K562 (cell line): ENCODE measurements at regions of chr14 and their contacts with region 1.

Region 1: DNA sequence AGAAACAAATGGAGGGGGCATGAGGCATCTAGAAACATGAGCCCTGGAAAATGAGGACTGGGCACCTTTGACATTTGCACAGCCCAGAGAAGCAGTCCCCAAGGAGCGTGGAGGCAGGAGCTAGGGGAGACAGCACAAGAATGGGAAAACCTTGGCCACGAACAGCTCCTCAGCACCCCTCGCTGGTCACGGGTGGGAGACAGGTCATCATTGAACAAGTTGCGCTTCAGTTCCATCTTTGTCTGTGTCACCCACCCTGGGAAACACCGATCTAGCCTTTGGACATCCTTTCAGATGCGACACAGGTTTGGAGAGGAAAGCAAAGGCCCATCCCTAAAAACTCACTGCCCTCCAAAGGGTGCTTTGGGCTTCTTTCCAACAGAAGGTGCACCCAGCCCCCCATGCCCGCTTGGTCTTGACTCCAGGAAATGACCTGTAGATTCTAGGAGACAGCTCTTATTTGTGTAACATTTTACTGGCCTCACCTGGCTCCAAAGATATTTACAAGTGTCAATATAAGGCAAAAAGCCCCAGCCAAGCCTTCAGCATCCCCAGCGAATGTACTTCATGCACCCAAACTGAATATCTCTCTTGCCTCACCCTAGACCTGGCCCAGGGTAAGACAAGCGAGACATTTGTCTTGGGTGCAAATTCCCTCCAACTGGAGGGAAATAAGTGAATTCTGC is 28.8 kb upstream of the CLMN start:
- DNase-seq: no peak
- ATAC-seq: no peak
- H3K4me3 ChIP-seq: no peak overlapping the region
- H3K27ac ChIP-seq: no peak overlapping the region
- H3K4me1 ChIP-seq: no peaks in the 10 kb centered on the region
- H3K27me3 ChIP-seq: no peaks in the 10 kb centered on the region; a peak in 1 of 5 replicates
- CTCF ChIP-seq: no peak
- EP300 ChIP-seq: no peak
- POLR2A ChIP-seq: no peak
- RAD21 ChIP-seq: no peak

Region 2: DNA sequence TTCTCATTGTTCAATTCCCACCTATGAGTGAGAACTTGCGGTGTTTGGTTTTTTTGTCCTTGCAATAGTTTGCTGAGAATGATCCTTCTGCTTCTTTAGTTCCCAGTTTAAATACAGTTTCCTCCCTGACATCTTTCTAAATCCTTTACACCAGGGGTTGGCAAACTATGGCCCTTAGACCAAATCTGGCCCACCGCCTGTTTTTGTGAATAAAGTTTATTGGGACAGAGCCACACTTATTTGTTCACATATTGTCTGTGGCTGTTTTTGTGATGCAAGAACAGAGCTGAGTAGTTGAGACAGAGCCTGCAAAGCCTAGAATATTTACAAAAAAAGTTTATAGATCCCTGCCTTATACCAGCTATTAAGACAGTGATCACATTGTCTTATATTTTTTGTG is 1109.1 kb before region 1 on chr14:
- CTCF ChIA-PET with region 1: no interaction called
- POLR2A ChIA-PET with region 1: no interaction called
- in situ Hi-C with region 1: no loop called
- intact Hi-C with region 1: no loop called
- DNase-seq: no peak
- ATAC-seq: no peak
- H3K4me3 ChIP-seq: no peak overlapping the region
- H3K27ac ChIP-seq: no peak overlapping the region
- H3K4me1 ChIP-seq: no peaks in the 10 kb centered on the region
- H3K27me3 ChIP-seq: no peaks in the 10 kb centered on the region
- CTCF ChIP-seq: no peak
- EP300 ChIP-seq: no peak
- POLR2A ChIP-seq: no peak
- RAD21 ChIP-seq: no peak

Region 3: GRCh38 chr14:95255487-95255886 is 93.1 kb before region 1 on chr14:
- CTCF ChIA-PET with region 1: no interaction called
- POLR2A ChIA-PET with region 1: no interaction called
- in situ Hi-C with region 1: no loop called
- intact Hi-C with region 1: no loop called
- DNase-seq: peak; percentile 16 to 40 (median 30)
- ATAC-seq: peak; percentile 88
- H3K4me3 ChIP-seq: no peak overlapping the region
- H3K27ac ChIP-seq: no peak overlapping the region
- H3K4me1 ChIP-seq: no peaks in the 10 kb centered on the region
- H3K27me3 ChIP-seq: peaks cover 2 to 32% of the 10 kb centered on the region in 2 experiments; a peak in 2 of 5 replicates
- CTCF ChIP-seq: no peak
- EP300 ChIP-seq: no peak
- POLR2A ChIP-seq: no peak
- RAD21 ChIP-seq: no peak

Region 4: DNA sequence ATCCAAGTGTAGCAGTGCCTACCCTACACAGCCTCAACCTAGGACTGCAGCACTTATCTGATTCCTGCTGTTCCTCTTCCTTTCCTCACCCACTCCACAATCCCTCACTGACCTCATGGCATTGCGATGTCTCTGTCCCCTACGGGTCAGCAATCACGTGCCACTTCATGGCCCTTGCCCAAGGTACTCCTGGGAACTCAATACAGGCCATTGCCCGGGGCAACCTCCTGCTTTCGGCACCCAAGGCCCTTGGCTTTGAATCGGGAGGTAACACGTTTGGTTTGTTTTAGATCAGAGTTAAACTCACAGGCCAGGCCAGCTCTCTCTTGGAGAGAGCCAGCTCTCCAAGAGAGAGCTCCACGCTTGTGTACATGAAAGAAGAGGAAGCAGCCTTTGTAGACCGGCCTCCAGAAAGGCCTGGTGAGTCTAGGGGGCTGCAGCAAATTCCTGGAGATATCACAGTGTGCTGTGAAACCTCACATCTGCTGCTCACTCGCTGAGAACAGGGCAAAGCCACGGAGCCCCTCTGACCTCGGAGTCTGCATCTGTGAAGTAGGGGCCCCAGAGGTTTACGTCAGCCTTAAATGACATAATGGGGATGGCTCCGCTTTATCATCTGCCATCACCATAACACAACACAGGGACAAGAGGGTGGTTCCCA is 41.0 kb before region 1 on chr14:
- CTCF ChIA-PET with region 1: no interaction called
- POLR2A ChIA-PET with region 1: no interaction called
- in situ Hi-C with region 1: no loop called
- intact Hi-C with region 1: no loop called
- DNase-seq: no peak
- ATAC-seq: no peak
- H3K4me3 ChIP-seq: no peak overlapping the region
- H3K27ac ChIP-seq: no peak overlapping the region
- H3K4me1 ChIP-seq: no peaks in the 10 kb centered on the region
- H3K27me3 ChIP-seq: peaks cover 3 to 42% of the 10 kb centered on the region in 2 experiments; a peak in 3 of 5 replicates
- CTCF ChIP-seq: no peak
- EP300 ChIP-seq: no peak
- POLR2A ChIP-seq: no peak
- RAD21 ChIP-seq: no peak

Region 5: DNA sequence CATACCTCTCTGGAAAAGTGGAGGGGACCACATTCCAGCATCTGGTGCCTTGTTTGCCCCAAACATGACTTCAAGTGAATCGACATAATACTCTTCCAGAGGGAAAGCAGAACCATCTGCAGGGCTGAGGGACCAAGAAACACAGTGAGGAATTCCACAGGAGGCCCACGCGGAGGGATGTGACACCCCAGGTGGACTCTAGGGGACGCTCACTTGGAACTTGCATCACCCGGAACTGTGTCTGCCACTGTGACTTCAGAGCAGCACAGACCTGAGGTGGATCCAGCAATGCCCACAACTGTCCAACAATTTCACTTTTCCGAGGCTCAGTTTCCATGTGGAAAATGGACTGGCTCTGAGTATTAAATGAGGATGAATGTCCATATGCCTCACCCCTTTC is 14.5 kb before region 1 on chr14:
- CTCF ChIA-PET with region 1: no interaction called
- POLR2A ChIA-PET with region 1: interaction called, 3 read pairs
- in situ Hi-C with region 1: no loop called
- intact Hi-C with region 1: loop called (anchors 1 kb)
- DNase-seq: peak in 2 of 4 experiments; percentile 21
- ATAC-seq: peak; percentile 77
- H3K4me3 ChIP-seq: no peak overlapping the region
- H3K27ac ChIP-seq: no peak overlapping the region
- H3K4me1 ChIP-seq: no peaks in the 10 kb centered on the region
- H3K27me3 ChIP-seq: peaks cover 2 to 7% of the 10 kb centered on the region in 2 experiments; a peak in 1 of 5 replicates
- CTCF ChIP-seq: peak; percentile 22 to 34 (median 26); a peak in 3 of 6 replicates
- EP300 ChIP-seq: no peak
- POLR2A ChIP-seq: no peak
- RAD21 ChIP-seq: no peak

Region 6: GRCh38 chr14:95483309-95484165 is 135.0 kb after region 1 on chr14:
- CTCF ChIA-PET with region 1: no interaction called
- POLR2A ChIA-PET with region 1: no interaction called
- in situ Hi-C with region 1: no loop called
- intact Hi-C with region 1: no loop called
- DNase-seq: peak in 2 of 4 experiments; percentile 13 to 16
- ATAC-seq: no peak
- H3K4me3 ChIP-seq: no peak overlapping the region
- H3K27ac ChIP-seq: no peak overlapping the region
- H3K4me1 ChIP-seq: peaks cover 0 to 4% of the 10 kb centered on the region in 2 experiments; a peak in 2 of 5 replicates
- H3K27me3 ChIP-seq: peaks cover 0 to 20% of the 10 kb centered on the region in 2 experiments; a peak in 3 of 5 replicates
- CTCF ChIP-seq: no peak
- EP300 ChIP-seq: no peak
- POLR2A ChIP-seq: no peak
- RAD21 ChIP-seq: no peak